ENCODE measurements at regions of chr12 and their contacts with region 1.

Region 1: DNA sequence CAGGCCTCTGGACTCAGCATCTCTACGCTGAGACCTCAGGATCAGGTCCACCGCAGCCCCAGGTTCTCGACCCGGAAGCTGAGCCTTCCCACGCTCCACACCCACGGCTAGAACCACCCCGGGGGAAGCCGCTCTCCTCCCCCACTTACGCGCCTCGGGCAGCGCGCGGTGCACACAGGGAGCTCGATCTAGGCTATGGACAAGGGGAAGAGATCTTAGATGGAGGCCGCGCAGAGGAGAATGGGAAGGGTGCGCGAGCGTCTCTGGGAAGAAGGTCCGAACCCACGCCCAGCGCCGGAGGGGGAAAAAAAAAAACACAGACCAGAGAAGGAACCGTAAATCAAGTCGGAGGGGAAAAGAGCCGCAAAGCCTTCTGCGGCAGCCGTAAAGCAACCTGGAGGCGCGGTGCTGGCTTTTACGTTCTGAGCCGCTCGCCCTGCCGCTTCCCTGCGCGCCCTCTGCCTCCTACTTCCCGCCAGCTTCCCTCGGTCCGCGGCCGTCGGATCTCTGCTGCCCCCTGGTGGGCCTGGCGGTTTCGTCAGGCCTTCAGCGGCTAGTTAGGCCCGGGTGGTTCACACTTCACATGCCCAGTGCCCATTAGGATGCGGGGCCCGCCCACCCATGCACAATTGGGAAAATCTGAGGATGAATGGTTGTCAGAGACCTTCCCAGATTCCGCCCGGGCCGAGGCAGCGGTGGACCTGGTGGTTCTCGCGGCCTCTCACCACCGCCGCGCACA is at the start of gene RAD52:
- DNase-seq: peak; percentile 98
- H3K4me3 Mint-ChIP-seq: peak within 1 kb of the TSS; percentile 93
- H3K27ac Mint-ChIP-seq: peak within 1 kb of the TSS; percentile 96
- H3K4me1 Mint-ChIP-seq: peaks cover 34% of the 10 kb centered on the region
- H3K27me3 Mint-ChIP-seq: no peaks in the 10 kb centered on the region
- total RNA-seq, gene RAD52: 15.6 to 17.9 TPM

Region 2: DNA sequence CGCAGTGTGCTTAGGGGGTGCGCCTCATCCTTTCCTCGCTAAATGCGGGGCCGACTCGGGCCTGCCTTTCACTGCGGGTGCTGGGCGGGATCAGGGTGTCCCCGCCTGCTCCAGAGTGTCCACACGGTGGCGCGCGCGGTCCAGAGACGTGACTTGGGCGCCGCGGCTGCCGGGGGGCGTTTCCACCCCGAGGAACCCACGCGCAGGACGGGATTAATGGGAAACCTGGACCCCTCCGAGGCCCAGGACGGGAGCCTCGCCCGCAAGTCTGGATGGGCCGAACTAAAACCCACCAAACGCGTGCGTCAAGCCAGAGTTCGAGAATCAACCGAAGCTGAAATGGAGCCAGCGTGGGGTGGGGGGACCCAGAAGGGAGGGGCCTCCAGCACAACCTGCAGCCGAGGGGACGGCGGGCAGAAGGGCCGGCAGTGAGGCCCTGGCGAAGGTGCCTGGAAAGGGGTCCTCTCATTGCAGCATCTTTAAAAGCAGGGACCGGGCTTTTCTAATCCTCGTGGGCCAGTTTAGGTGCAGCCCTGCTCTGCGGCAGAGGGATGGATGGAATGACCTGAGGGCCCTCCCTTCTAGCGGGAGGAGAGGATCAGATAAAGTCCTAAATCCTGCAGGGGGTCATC is 379.7 kb before region 1 on chr12:
- CTCF ChIA-PET with region 1: interaction called, 12 read pairs
- intact Hi-C with region 1: loop called (anchors 1 kb)
- DNase-seq: peak; percentile 91
- H3K4me3 Mint-ChIP-seq: peak overlapping the region; percentile 80
- H3K27ac Mint-ChIP-seq: no peak overlapping the region
- H3K4me1 Mint-ChIP-seq: peaks cover 58% of the 10 kb centered on the region
- H3K27me3 Mint-ChIP-seq: no peaks in the 10 kb centered on the region

Region 3: GRCh38 chr12:666766-667308 is 282.8 kb before region 1 on chr12:
- CTCF ChIA-PET with region 1: no interaction called
- intact Hi-C with region 1: loop called (anchors 1 kb)
- DNase-seq: peak; percentile 47
- H3K4me3 Mint-ChIP-seq: peak overlapping the region; percentile 36
- H3K27ac Mint-ChIP-seq: peak overlapping the region; percentile 78
- H3K4me1 Mint-ChIP-seq: peaks cover 75% of the 10 kb centered on the region
- H3K27me3 Mint-ChIP-seq: no peaks in the 10 kb centered on the region

Region 4: DNA sequence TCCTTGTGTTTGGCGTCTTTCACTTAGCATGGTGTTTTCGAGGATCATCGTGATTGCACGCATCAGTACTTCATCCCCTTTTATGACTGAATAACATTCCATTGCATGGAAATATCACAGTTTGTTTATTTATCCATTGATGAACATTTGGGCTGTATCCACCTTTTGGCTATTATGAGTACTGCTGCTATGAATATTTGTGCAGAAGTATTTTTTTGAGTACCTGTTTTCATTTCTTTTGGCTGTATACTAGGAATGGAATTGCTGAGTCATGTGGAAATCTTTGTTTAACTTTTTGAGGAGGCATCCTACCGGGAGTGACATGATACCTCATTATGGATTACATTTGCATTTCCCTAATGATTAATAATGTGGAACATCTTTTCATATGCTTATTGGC is 130.9 kb before region 1 on chr12:
- CTCF ChIA-PET with region 1: interaction called, 17 read pairs
- intact Hi-C with region 1: loop called (anchors 1 kb)
- DNase-seq: no peak
- H3K4me3 Mint-ChIP-seq: no peak overlapping the region
- H3K27ac Mint-ChIP-seq: no peak overlapping the region
- H3K4me1 Mint-ChIP-seq: peaks cover 42% of the 10 kb centered on the region
- H3K27me3 Mint-ChIP-seq: no peaks in the 10 kb centered on the region

Region 5: GRCh38 chr12:990661-991349 is 41.2 kb after region 1 on chr12 and contains the start of gene ERC1:
- CTCF ChIA-PET with region 1: interaction called, 6 read pairs
- intact Hi-C with region 1: loop called (anchors 1 kb)
- DNase-seq: peak; percentile 83
- H3K4me3 Mint-ChIP-seq: peak within 1 kb of the TSS; percentile 86
- H3K27ac Mint-ChIP-seq: peak within 1 kb of the TSS; percentile 77
- H3K4me1 Mint-ChIP-seq: peaks cover 32% of the 10 kb centered on the region
- H3K27me3 Mint-ChIP-seq: no peaks in the 10 kb centered on the region
- total RNA-seq, gene ERC1: 17.4 to 20.7 TPM

Region 6: DNA sequence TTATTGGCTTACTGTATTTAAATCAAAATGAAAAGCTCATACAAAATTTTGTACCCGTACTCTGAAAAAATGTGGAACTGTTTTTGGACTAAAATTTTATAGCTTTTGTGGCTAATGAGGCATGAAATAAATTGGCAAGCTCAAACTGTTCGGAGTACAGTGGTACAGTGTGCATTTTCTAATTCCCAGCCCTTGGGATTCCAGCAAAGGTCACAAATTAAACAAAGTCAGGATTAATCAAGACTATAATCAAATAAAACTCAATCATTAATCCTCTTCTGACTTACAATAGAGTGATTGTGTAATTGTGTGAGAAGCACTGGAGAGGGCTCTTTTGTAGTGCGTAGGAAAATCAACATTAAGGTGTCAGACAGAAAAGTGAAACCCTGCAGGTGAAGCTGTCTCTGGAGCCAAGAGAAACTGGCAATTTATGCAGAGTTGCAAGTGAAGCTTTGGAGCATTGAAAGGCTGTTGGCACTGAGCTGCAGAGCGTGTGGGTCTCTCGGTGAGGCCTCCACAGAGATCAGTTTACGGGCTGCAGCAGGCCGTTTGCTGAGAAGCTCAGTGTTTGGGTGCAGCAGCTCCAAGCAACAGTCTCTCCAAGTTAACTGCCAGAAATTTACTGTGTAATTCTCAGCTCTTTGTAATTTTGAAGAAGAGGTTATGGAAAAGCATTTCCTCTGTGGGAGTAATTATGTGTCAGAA is 368.9 kb after region 1 on chr12:
- CTCF ChIA-PET with region 1: no interaction called
- intact Hi-C with region 1: no loop called
- DNase-seq: no peak
- H3K4me3 Mint-ChIP-seq: no peak overlapping the region
- H3K27ac Mint-ChIP-seq: no peak overlapping the region
- H3K4me1 Mint-ChIP-seq: peaks cover 4% of the 10 kb centered on the region
- H3K27me3 Mint-ChIP-seq: no peaks in the 10 kb centered on the region

Region 7: DNA sequence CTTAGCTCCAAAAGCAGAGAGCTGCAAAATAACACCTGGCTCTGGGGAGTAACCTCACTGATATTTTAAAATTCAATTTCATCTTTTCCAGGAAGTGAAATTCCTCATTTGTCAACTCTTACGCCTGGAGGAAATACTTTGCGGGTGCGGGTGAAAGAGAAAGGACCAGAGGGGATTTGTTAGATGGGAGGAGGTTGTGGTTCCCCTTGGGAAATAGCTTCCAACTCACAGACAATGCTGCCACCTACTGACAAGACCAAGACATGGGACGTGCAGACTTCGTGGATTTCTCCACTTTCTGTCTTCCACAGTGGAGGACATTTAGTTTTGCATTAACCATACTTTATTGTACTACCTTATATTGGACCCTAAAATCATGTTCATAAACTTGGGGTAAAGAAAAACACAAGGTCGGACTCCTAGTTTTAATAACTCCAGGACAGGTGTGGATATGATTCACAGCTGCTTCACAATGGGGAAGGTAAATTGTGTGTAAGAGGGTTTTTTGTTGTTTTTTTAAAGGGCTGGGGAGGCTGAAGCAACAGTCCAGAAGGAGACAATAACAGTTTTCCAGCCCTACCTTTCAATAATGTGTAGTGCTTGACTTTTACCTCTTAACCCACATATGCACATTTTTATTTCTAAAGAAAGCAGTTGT is 633.9 kb after region 1 on chr12:
- CTCF ChIA-PET with region 1: interaction called, 4 read pairs
- intact Hi-C with region 1: loop called (anchors 1 kb)
- DNase-seq: peak; percentile 83
- H3K4me3 Mint-ChIP-seq: no peak overlapping the region
- H3K27ac Mint-ChIP-seq: no peak overlapping the region
- H3K4me1 Mint-ChIP-seq: peaks cover 19% of the 10 kb centered on the region
- H3K27me3 Mint-ChIP-seq: no peaks in the 10 kb centered on the region